B cell (primary cell): ENCODE measurements at regions of chr17 and their contacts with region 1.

Region 1: GRCh38 chr17:68035523-68036303 is at the start of gene KPNA2:
- DNase-seq: peak; percentile 96
- ATAC-seq: peak; percentile 88
- H3K4me3 ChIP-seq: peak within 1 kb of the TSS; percentile 68 to 98 (median 88)
- H3K4me3 Mint-ChIP-seq: peak within 1 kb of the TSS; percentile 95
- H3K27ac ChIP-seq: peak within 1 kb of the TSS; percentile 75 to 77
- H3K27ac Mint-ChIP-seq: peak within 1 kb of the TSS; percentile 67
- H3K4me1 ChIP-seq: peaks cover 7 to 9% of the 10 kb centered on the region in 2 donors
- H3K4me1 Mint-ChIP-seq: peaks cover 11% of the 10 kb centered on the region
- H3K27me3 ChIP-seq: no peaks in the 10 kb centered on the region
- H3K27me3 Mint-ChIP-seq: no peaks in the 10 kb centered on the region
- CTCF ChIP-seq: no peak
- total RNA-seq, gene KPNA2: 20.0 and 21.2 TPM in 2 replicates

Region 2: GRCh38 chr17:67717624-67718329 is 317.9 kb before region 1 on chr17 and contains the start of gene NOL11:
- CTCF ChIA-PET with region 1: no interaction called
- POLR2A ChIA-PET with region 1: no interaction called
- intact Hi-C with region 1: loop called (anchors 2 kb)
- DNase-seq: peak; percentile 100
- ATAC-seq: peak; percentile 95
- H3K4me3 ChIP-seq: peak within 1 kb of the TSS; percentile 70 to 97 (median 91)
- H3K4me3 Mint-ChIP-seq: peak within 1 kb of the TSS; percentile 98
- H3K27ac ChIP-seq: peak within 1 kb of the TSS; percentile 88 to 97
- H3K27ac Mint-ChIP-seq: peak within 1 kb of the TSS; percentile 97
- H3K4me1 ChIP-seq: peaks cover 18 to 21% of the 10 kb centered on the region in 2 donors
- H3K4me1 Mint-ChIP-seq: peaks cover 20% of the 10 kb centered on the region
- H3K27me3 ChIP-seq: no peaks in the 10 kb centered on the region
- H3K27me3 Mint-ChIP-seq: no peaks in the 10 kb centered on the region
- CTCF ChIP-seq: peak; percentile 86
- total RNA-seq, gene NOL11: 59.1 and 59.9 TPM in 2 replicates

Region 3: GRCh38 chr17:68019675-68020408 is 15.9 kb before region 1 on chr17:
- CTCF ChIA-PET with region 1: no interaction called
- POLR2A ChIA-PET with region 1: no interaction called
- intact Hi-C with region 1: loop called (anchors 1 kb)
- DNase-seq: peak; percentile 97
- ATAC-seq: peak; percentile 89
- H3K4me3 ChIP-seq: peak overlapping the region; percentile 55 to 92 (median 77)
- H3K4me3 Mint-ChIP-seq: peak overlapping the region; percentile 90
- H3K27ac ChIP-seq: peak overlapping the region; percentile 44 to 61
- H3K27ac Mint-ChIP-seq: peak overlapping the region; percentile 100
- H3K4me1 ChIP-seq: peaks cover 7 to 14% of the 10 kb centered on the region in 2 donors
- H3K4me1 Mint-ChIP-seq: peaks cover 18% of the 10 kb centered on the region
- H3K27me3 ChIP-seq: no peaks in the 10 kb centered on the region
- H3K27me3 Mint-ChIP-seq: no peaks in the 10 kb centered on the region
- CTCF ChIP-seq: peak; percentile 71

Region 4: GRCh38 chr17:68101075-68101992 is 65.6 kb after region 1 on chr17:
- CTCF ChIA-PET with region 1: no interaction called
- POLR2A ChIA-PET with region 1: no interaction called
- intact Hi-C with region 1: loop called (anchors 1 kb)
- DNase-seq: peak; percentile 86
- ATAC-seq: peak; percentile 93
- H3K4me3 ChIP-seq: peak overlapping the region; percentile 38 to 94 (median 72)
- H3K4me3 Mint-ChIP-seq: peak overlapping the region; percentile 92
- H3K27ac ChIP-seq: peak overlapping the region; percentile 76 to 90
- H3K27ac Mint-ChIP-seq: peak overlapping the region; percentile 95
- H3K4me1 ChIP-seq: peaks cover 14 to 17% of the 10 kb centered on the region in 2 donors
- H3K4me1 Mint-ChIP-seq: peaks cover 34% of the 10 kb centered on the region
- H3K27me3 ChIP-seq: no peaks in the 10 kb centered on the region
- H3K27me3 Mint-ChIP-seq: no peaks in the 10 kb centered on the region
- CTCF ChIP-seq: no peak

Region 5: GRCh38 chr17:68247445-68248198 is 211.9 kb after region 1 on chr17 and contains the start of gene AMZ2:
- CTCF ChIA-PET with region 1: no interaction called
- POLR2A ChIA-PET with region 1: interaction called, 3 read pairs
- intact Hi-C with region 1: loop called (anchors 5 kb)
- DNase-seq: peak; percentile 99
- ATAC-seq: peak; percentile 89
- H3K4me3 ChIP-seq: peak within 1 kb of the TSS; percentile 24 to 81 (median 76)
- H3K4me3 Mint-ChIP-seq: peak within 1 kb of the TSS; percentile 96
- H3K27ac ChIP-seq: peak within 1 kb of the TSS; percentile 96 to 98
- H3K27ac Mint-ChIP-seq: peak within 1 kb of the TSS; percentile 99
- H3K4me1 ChIP-seq: peaks cover 31 to 34% of the 10 kb centered on the region in 2 donors
- H3K4me1 Mint-ChIP-seq: peaks cover 54% of the 10 kb centered on the region
- H3K27me3 ChIP-seq: no peaks in the 10 kb centered on the region
- H3K27me3 Mint-ChIP-seq: no peaks in the 10 kb centered on the region
- CTCF ChIP-seq: no peak
- total RNA-seq, gene AMZ2: 70.7 and 74.3 TPM in 2 replicates

Region 6: DNA sequence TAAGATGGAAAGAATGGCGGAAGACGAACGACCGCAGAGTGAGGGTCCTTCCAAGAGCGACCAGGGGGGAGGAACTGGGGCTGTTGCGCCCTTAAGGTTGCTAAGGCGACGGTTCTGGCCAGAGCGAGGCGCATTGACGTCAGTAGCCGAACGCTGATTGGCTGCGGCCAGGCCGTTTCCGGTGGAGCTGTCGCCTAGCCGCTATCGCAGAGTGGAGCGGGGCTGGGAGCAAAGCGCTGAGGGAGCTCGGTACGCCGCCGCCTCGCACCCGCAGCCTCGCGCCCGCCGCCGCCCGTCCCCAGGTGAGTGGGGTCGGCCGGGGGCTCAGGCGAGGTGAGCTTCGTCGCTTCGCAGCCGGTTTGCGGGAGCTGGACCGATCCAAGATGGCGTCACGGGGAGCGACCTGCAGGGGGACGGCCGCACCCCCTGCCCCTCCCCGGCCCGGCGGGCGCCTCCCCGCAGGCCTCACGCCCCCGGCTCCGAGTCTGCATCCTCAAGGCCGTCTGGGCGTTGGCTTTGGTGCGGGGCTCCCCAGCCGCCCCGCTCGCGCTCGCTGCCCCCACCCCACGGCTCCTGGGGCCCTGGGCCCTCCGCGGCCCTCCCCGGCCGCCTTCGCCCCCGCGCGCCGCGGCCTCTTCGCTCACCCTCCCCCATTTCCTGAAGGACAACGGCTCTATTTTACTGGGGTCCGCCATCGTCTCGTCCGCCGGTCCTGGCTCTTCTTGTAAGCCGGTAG is 476.7 kb after region 1 on chr17 and contains the start of gene PRKAR1A:
- CTCF ChIA-PET with region 1: no interaction called
- POLR2A ChIA-PET with region 1: interaction called, 3 read pairs
- intact Hi-C with region 1: loop called (anchors 5 kb)
- DNase-seq: peak; percentile 98
- ATAC-seq: peak; percentile 75
- H3K4me3 ChIP-seq: peak within 1 kb of the TSS; percentile 62 to 99 (median 85)
- H3K4me3 Mint-ChIP-seq: peak within 1 kb of the TSS; percentile 100
- H3K27ac ChIP-seq: peak within 1 kb of the TSS; percentile 99
- H3K27ac Mint-ChIP-seq: peak within 1 kb of the TSS; percentile 100
- H3K4me1 ChIP-seq: peaks cover 25 to 28% of the 10 kb centered on the region in 2 donors
- H3K4me1 Mint-ChIP-seq: peaks cover 42% of the 10 kb centered on the region
- H3K27me3 ChIP-seq: no peaks in the 10 kb centered on the region
- H3K27me3 Mint-ChIP-seq: no peaks in the 10 kb centered on the region
- CTCF ChIP-seq: no peak
- total RNA-seq, gene PRKAR1A: 296 and 297 TPM in 2 replicates